ENCODE measurements at regions of chr10 and their contacts with region 1.

Region 1: GRCh38 chr10:72557362-72557761 is 68.5 kb downstream of the MICU1 start:
- DNase-seq: no peak
- H3K4me3 ChIP-seq: no peak overlapping the region
- H3K4me3 Mint-ChIP-seq: no peak overlapping the region
- H3K27ac ChIP-seq: no peak overlapping the region
- H3K27ac Mint-ChIP-seq: no peak overlapping the region
- H3K4me1 ChIP-seq: no peaks in the 10 kb centered on the region
- H3K4me1 Mint-ChIP-seq: no peaks in the 10 kb centered on the region
- H3K27me3 ChIP-seq: no peaks in the 10 kb centered on the region
- H3K27me3 Mint-ChIP-seq: no peaks in the 10 kb centered on the region

Region 2: DNA sequence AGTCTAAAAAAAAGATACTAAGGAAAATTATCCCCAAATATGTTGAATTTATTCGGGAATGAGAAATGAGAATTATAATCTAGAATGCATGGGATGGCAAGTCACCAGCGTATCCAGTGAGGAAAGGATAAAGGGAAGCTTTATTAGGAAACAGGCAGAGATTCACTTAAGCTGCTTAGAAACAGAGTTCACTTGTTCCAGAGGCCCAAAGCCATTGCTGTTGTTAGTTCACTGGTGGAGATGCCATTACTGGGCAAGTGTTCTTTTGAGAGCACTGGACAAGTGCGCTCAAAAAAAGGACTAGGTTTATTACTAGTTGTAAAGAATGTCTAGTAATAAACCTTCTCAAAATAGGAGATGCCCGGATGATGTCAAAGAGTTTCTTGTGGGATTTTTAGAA is 17.3 kb after region 1 on chr10:
- CTCF ChIA-PET with region 1: no interaction called
- POLR2A ChIA-PET with region 1: interaction called, 17 read pairs
- DNase-seq: no peak
- H3K4me3 ChIP-seq: no peak overlapping the region
- H3K4me3 Mint-ChIP-seq: no peak overlapping the region
- H3K27ac ChIP-seq: no peak overlapping the region
- H3K27ac Mint-ChIP-seq: no peak overlapping the region
- H3K4me1 ChIP-seq: no peaks in the 10 kb centered on the region
- H3K4me1 Mint-ChIP-seq: peaks cover 0 to 10% (median 5%) of the 10 kb centered on the region in 3 donors
- H3K27me3 ChIP-seq: no peaks in the 10 kb centered on the region
- H3K27me3 Mint-ChIP-seq: no peaks in the 10 kb centered on the region